PC-9 (cell line): ENCODE measurements at regions of chr10 and their contacts with region 1.

Region 1: GRCh38 chr10:23344241-23344841 is at the start of gene C10orf67:
- DNase-seq: peak; percentile 49 to 59
- H3K4me3 ChIP-seq: peak within 1 kb of the TSS; percentile 63
- H3K27ac ChIP-seq: peak within 1 kb of the TSS; percentile 82
- H3K4me1 ChIP-seq: peaks cover 56% of the 10 kb centered on the region
- H3K27me3 ChIP-seq: no peaks in the 10 kb centered on the region
- CTCF ChIP-seq: no peak
- total RNA-seq, gene C10orf67: 1.2 and 1.3 TPM in 2 replicates

Region 2: GRCh38 chr10:23095404-23095965 is 248.9 kb before region 1 on chr10 and contains the start of gene MSRB2:
- CTCF ChIA-PET with region 1: no interaction called
- POLR2A ChIA-PET with region 1: interaction called, 10 read pairs
- intact Hi-C with region 1: no loop called
- DNase-seq: peak; percentile 64 to 80
- H3K4me3 ChIP-seq: peak within 1 kb of the TSS; percentile 75
- H3K27ac ChIP-seq: 0 out of 2 replicates have a peak within 1 kb of the TSS, but pooled peaks have one; percentile 6
- H3K4me1 ChIP-seq: peaks cover 13% of the 10 kb centered on the region
- H3K27me3 ChIP-seq: no peaks in the 10 kb centered on the region
- CTCF ChIP-seq: no peak
- total RNA-seq, gene MSRB2: 28.3 and 31.7 TPM in 2 replicates

Region 3: GRCh38 chr10:23383637-23384036 is 39.3 kb after region 1 on chr10:
- CTCF ChIA-PET with region 1: interaction called, 3 read pairs
- POLR2A ChIA-PET with region 1: interaction called, 4 read pairs
- intact Hi-C with region 1: loop called (anchors 1 kb)
- DNase-seq: no peak
- H3K4me3 ChIP-seq: no peak overlapping the region
- H3K27ac ChIP-seq: peak overlapping the region; percentile 71
- H3K4me1 ChIP-seq: peaks cover 16% of the 10 kb centered on the region; the same call in 1 of the 2 replicates
- H3K27me3 ChIP-seq: no peaks in the 10 kb centered on the region
- CTCF ChIP-seq: no peak

Region 4: DNA sequence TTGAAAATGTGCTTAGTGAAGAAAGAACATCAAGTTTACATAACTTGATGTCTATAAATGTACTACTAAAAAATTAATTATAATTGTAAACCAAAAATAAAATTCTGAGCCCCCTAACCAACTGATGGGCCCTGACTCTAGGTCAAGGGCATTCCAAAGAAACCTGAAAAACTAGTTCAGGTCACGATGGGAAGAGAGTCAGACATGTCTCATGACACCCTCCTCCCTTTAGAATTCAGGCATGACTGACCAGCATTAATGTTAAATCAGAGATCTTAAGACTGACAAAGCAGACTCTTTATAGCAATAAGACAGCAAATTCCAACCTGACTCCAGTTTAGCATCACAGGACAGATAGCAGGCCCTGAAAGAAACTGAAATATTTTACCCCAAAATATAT is 72.9 kb after region 1 on chr10:
- CTCF ChIA-PET with region 1: no interaction called
- POLR2A ChIA-PET with region 1: interaction called, 10 read pairs
- intact Hi-C with region 1: no loop called
- DNase-seq: peak in 1 of 2 experiments; percentile 76
- H3K4me3 ChIP-seq: no peak overlapping the region
- H3K27ac ChIP-seq: peak overlapping the region; percentile 70
- H3K4me1 ChIP-seq: peaks cover 60% of the 10 kb centered on the region
- H3K27me3 ChIP-seq: no peaks in the 10 kb centered on the region
- CTCF ChIP-seq: no peak

Region 5: DNA sequence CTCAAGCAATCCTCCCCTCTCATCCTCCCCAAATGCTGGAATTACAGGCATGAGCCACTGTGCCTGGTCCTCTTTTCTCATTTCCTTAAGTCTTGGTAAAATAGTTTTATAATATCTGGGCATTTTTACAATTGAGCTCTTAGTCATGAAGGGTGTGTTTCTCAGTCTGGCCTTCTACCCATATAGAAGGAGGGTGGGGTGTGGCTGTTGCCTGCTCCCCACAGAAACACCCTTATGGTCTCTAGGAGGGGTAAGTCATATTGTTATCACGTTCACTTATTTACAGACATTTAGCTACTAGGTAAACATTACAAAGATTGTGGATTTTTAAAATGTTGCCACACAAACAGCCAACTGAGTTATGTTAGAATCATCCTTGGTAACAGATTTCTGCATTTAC is 87.8 kb after region 1 on chr10:
- CTCF ChIA-PET with region 1: no interaction called
- POLR2A ChIA-PET with region 1: interaction called, 13 read pairs
- intact Hi-C with region 1: no loop called
- DNase-seq: peak; percentile 50 to 93
- H3K4me3 ChIP-seq: peak overlapping the region; percentile 30; the same call in 1 of the 2 replicates
- H3K27ac ChIP-seq: peak overlapping the region; percentile 97
- H3K4me1 ChIP-seq: peaks cover 28% of the 10 kb centered on the region
- H3K27me3 ChIP-seq: no peaks in the 10 kb centered on the region
- CTCF ChIP-seq: no peak